ENCODE measurements at regions of chr2 and their contacts with region 1.

Region 1: GRCh38 chr2:164992818-164993217 is 37.5 kb upstream of the SLC38A11 start:
- DNase-seq: peak in 1 of 2 donors; percentile 71
- H3K4me3 ChIP-seq: no peak overlapping the region
- CTCF ChIP-seq: no peak
- POLR2A ChIP-seq: no peak

Region 2: DNA sequence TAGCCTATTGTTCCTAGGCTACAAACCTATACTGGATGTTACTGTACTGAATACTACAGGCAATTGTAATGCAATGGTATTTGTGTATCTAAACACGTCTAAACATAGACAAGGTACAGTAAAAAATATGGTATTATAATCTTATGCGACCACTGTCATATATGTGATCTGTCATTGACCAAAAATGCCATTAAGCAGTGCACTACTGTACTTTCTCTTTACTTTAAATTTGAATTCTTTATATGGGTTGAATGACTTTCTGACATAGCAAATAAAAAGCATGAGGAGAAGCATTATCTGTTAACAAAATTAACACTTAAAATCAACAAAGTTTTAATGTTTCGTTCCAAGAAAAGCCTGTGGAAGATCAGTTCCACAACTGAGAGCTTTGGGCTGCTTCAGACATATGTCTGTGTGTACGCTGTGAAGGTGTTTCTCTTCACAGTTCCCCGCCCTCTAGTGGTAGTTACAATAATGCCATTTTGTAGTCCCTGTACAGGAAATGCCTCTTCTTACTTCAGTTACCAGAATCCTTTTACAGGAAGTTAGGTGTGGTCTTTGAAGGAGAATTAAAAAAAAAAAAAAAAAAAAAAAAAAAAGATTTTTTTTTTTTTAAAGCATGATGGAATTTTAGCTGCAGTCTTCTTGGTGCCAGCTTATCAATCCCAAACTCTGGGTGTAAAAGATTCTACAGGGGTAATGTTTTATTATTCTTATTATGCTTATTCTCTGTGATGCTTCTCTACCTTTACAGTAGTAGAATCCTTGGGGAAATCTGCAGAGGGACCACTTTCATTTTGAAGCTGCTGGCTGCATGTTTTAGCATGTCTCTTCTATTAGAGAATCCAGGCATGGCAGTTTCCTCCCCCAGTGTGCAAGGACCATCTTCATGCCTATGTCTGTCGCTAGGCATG is 300.9 kb after region 1 on chr2:
- intact Hi-C with region 1: loop called (anchors 2 kb)
- DNase-seq: peak in 1 of 2 donors; percentile 71
- H3K4me3 ChIP-seq: no peak overlapping the region
- CTCF ChIP-seq: no peak
- POLR2A ChIP-seq: no peak

Region 3: DNA sequence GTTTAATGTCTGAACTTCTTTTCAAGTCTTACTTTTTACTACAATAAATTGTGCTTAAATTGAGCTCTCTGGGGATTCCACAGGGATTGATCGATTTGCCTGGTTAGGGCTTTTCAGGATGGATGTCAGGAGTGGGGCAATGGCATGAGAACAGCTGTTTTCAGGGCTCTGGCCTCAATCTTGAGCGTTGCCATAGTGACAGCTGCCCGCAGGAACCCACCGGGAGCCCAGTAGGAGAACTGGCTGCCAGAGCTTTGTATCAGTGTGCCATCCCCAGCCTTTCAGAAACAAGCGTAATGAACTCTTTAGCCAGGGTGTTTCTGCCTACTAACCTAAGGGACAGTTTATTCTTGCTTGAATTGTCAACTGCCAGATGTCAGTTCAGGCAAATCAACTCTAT is 707.7 kb after region 1 on chr2:
- intact Hi-C with region 1: loop called (anchors 10 kb)
- DNase-seq: no peak
- H3K4me3 ChIP-seq: no peak overlapping the region
- CTCF ChIP-seq: no peak
- POLR2A ChIP-seq: no peak

Measured in lower leg skin (tissue), 4 donors.